ENCODE measurements at regions of chr1 and their contacts with region 1.

Region 1: DNA sequence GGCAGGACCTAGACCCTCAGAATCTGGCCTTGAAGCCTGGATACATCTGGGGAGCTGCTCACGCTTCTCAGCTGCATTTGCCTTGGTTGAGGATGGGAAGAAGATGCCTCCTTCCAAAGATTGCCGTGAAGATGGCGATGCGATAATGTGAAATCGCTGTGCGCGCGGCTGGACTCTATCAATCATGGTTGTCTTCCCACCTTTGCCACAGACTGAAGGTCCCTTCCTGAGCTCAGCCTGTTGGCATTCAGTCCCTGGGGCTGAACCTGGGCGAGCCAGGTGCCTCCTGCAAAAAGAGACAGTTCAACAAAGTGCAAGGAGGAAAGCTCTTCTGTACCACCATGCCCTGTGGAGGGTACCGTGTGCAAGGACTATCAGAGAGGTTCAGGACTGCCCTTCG is 114.3 kb upstream of the SLC45A1 start:
- DNase-seq: no peak
- ATAC-seq: no peak
- H3K4me3 ChIP-seq: no peak overlapping the region
- H3K27ac ChIP-seq: no peak overlapping the region
- H3K4me1 ChIP-seq: no peaks in the 10 kb centered on the region
- H3K27me3 ChIP-seq: no peaks in the 10 kb centered on the region; a peak in 1 of 4 replicates
- CTCF ChIP-seq: no peak
- EP300 ChIP-seq: no peak
- POLR2A ChIP-seq: no peak
- RAD21 ChIP-seq: no peak

Region 2: DNA sequence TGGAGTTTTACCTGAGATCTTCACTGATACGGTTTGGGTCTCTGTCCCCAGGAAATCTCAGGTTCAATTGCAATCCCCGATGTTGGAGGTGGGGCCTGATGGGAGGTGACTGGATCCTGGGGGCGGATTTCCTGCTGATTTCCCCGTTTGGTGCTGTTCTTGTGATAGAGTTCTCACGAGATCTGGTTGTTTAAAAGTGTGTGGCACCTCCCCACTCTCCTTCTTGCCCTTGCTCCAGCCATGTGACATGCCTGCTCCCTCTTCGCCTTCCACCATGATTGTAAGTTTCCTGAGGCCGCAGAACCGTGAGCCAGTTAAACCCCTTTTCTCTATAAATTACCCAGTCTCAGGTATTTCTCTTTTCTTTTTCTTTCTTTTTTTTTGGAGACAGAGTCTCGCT is 12.1 kb before region 1 on chr1:
- CTCF ChIA-PET with region 1: no interaction called
- POLR2A ChIA-PET with region 1: no interaction called
- RAD21 ChIA-PET with region 1: no interaction called
- SMC1A ChIA-PET with region 1: no interaction called
- in situ Hi-C with region 1: no loop called
- intact Hi-C with region 1: no loop called
- DNase-seq: no peak
- ATAC-seq: no peak
- H3K4me3 ChIP-seq: no peak overlapping the region
- H3K27ac ChIP-seq: no peak overlapping the region
- H3K4me1 ChIP-seq: no peaks in the 10 kb centered on the region; the same call in 1 of the 2 replicates
- H3K27me3 ChIP-seq: no peaks in the 10 kb centered on the region
- CTCF ChIP-seq: no peak
- EP300 ChIP-seq: no peak
- POLR2A ChIP-seq: no peak
- RAD21 ChIP-seq: no peak

Region 3: DNA sequence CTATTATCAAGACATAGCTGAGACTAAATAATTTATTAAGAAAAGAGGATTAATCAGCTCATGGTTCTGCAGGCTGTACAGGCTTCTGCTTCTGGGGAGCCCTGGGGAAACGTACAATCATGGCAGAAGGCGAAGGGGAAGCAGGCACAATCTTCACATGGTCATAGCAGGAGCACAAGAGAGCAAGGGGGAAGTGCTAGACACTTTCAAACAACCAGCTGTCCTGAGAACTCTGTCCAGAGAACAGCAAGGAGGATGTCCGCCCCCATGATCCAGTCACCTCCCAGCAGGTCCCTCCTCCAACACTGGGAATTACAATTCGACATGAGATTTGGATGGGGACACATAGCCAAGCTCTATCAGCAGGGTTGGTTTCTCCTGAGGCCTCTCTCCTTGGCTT is 104.0 kb after region 1 on chr1:
- CTCF ChIA-PET with region 1: no interaction called
- POLR2A ChIA-PET with region 1: no interaction called
- RAD21 ChIA-PET with region 1: no interaction called
- SMC1A ChIA-PET with region 1: no interaction called
- in situ Hi-C with region 1: no loop called
- intact Hi-C with region 1: no loop called
- DNase-seq: no peak
- ATAC-seq: no peak
- H3K4me3 ChIP-seq: no peak overlapping the region
- H3K27ac ChIP-seq: no peak overlapping the region
- H3K4me1 ChIP-seq: no peaks in the 10 kb centered on the region
- H3K27me3 ChIP-seq: no peaks in the 10 kb centered on the region
- CTCF ChIP-seq: no peak
- EP300 ChIP-seq: no peak
- POLR2A ChIP-seq: no peak
- RAD21 ChIP-seq: no peak

Region 4: DNA sequence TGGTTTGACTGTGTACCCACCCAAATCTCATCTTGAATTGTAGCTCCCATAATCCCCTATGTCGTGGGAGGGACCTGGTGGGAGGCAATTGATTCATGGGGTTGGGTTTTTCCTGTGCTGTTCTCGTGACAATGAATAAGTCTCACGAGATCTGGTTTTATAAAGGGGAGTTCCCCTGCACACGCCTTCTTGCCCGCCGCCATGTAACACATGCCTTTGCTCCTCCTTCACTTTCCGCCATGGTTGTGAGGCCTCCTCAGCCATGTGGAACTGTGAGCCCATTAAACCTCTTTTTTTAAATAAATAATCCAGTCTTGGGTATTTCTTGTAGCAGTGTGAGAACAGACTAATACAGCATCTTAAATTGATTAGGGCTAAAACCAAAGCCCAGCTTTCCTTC is 636.4 kb after region 1 on chr1:
- CTCF ChIA-PET with region 1: no interaction called
- POLR2A ChIA-PET with region 1: interaction called, 11 read pairs
- RAD21 ChIA-PET with region 1: no interaction called
- SMC1A ChIA-PET with region 1: no interaction called
- in situ Hi-C with region 1: no loop called
- intact Hi-C with region 1: no loop called
- DNase-seq: no peak
- ATAC-seq: no peak
- H3K4me3 ChIP-seq: no peak overlapping the region
- H3K27ac ChIP-seq: no peak overlapping the region
- H3K4me1 ChIP-seq: no peaks in the 10 kb centered on the region
- H3K27me3 ChIP-seq: no peaks in the 10 kb centered on the region
- CTCF ChIP-seq: no peak
- EP300 ChIP-seq: no peak
- POLR2A ChIP-seq: no peak
- RAD21 ChIP-seq: no peak